A549 (cell line): ENCODE measurements at regions of chr9 and their contacts with region 1.

Region 1: GRCh38 chr9:34546834-34547827 is 24.3 kb upstream of the ENHO start:
- DNase-seq: peak; percentile 66 to 78
- ATAC-seq: peak; percentile 83 to 91
- H3K4me3 ChIP-seq: no peak overlapping the region
- H3K27ac ChIP-seq: no peak overlapping the region
- H3K4me1 ChIP-seq: peaks cover 9% of the 10 kb centered on the region; the same call in 1 of the 3 replicates
- CTCF ChIP-seq: peak; percentile 65
- EP300 ChIP-seq: no peak
- POLR2A ChIP-seq: no peak
- RAD21 ChIP-seq: peak; percentile 61 to 72

Region 2: GRCh38 chr9:34203275-34203991 is 343.7 kb before region 1 on chr9:
- CTCF ChIA-PET with region 1: no interaction called
- POLR2A ChIA-PET with region 1: no interaction called
- DNase-seq: no peak
- ATAC-seq: peak in 1 of 2 experiments; percentile 43; a peak in 3 of 6 replicates
- H3K4me3 ChIP-seq: no peak overlapping the region
- H3K27ac ChIP-seq: peak overlapping the region; percentile 50 to 78; a peak in 5 of 6 replicates
- H3K4me1 ChIP-seq: peaks cover 43% of the 10 kb centered on the region
- CTCF ChIP-seq: no peak
- EP300 ChIP-seq: no peak
- POLR2A ChIP-seq: no peak
- RAD21 ChIP-seq: no peak

Region 3: GRCh38 chr9:34346873-34347799 is 200.0 kb before region 1 on chr9:
- CTCF ChIA-PET with region 1: no interaction called
- POLR2A ChIA-PET with region 1: no interaction called
- DNase-seq: no peak
- ATAC-seq: no peak
- H3K4me3 ChIP-seq: no peak overlapping the region
- H3K27ac ChIP-seq: no peak overlapping the region
- H3K4me1 ChIP-seq: no peaks in the 10 kb centered on the region
- CTCF ChIP-seq: no peak
- EP300 ChIP-seq: no peak
- POLR2A ChIP-seq: no peak
- RAD21 ChIP-seq: no peak

Region 4: GRCh38 chr9:34376596-34377403 is 170.3 kb before region 1 on chr9 and contains the start of gene MYORG:
- CTCF ChIA-PET with region 1: no interaction called
- POLR2A ChIA-PET with region 1: no interaction called
- DNase-seq: peak; percentile 96 to 98
- ATAC-seq: peak; percentile 78 to 89
- H3K4me3 ChIP-seq: peak within 1 kb of the TSS; percentile 79
- H3K27ac ChIP-seq: peak within 1 kb of the TSS; percentile 63 to 85
- H3K4me1 ChIP-seq: peaks cover 30% of the 10 kb centered on the region
- CTCF ChIP-seq: no peak
- EP300 ChIP-seq: no peak
- POLR2A ChIP-seq: peak; percentile 50
- RAD21 ChIP-seq: no peak
- polyA plus RNA-seq, gene MYORG: 2.2 and 3.7 TPM in 2 replicates

Region 5: DNA sequence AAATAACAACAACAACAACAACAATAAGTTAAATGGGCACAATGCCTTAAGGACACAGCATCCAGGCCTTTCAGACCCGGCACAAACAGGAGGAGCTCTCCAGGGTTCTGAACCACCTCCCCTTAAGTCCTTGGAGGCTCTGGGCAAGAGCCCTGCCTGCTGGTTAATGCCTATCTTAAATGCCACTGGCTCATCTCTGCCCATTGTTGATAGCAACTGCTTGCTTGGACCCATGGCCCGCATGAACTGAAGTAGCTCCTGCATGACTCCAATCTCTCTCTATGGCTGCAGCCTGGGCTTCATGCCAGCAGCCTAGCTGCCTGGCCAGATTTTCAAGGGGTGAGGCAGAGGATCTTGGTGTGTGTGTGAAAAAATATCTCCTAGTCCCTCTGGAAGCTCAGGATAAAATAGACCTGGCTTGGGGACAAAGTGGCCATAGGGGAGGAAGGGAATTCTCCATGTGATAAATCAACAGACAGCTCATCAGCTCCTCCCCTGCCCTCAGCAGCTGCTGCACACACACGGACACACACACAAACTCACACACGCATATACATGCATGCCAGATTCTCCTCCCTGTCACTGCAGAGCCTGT is 116.2 kb before region 1 on chr9:
- CTCF ChIA-PET with region 1: interaction called, 12 read pairs
- POLR2A ChIA-PET with region 1: no interaction called
- DNase-seq: peak; percentile 8 to 49
- ATAC-seq: peak; percentile 63 to 68; a peak in 5 of 6 replicates
- H3K4me3 ChIP-seq: no peak overlapping the region
- H3K27ac ChIP-seq: no peak overlapping the region
- H3K4me1 ChIP-seq: no peaks in the 10 kb centered on the region
- CTCF ChIP-seq: no peak
- EP300 ChIP-seq: no peak
- POLR2A ChIP-seq: no peak
- RAD21 ChIP-seq: no peak

Region 6: DNA sequence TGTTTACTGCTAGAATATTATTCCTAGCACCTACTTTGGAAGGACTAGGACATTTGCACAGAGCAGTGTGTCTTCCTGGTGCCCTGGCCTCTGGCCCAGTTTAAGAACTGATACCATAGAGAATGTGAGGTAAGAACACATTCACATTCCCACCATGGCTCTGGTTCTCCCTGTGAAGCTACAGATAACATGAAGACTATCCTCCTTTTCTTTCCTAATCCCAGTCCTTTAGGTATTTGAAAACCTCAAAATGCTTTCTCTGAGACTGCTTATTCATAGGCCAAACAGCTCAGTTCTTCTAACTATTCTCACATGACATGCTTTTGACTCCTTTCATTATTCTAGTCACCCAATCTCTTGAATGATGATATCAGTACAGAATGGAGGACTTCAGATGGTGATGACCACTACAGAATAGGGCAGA is 100.7 kb before region 1 on chr9:
- CTCF ChIA-PET with region 1: interaction called, 27 read pairs
- POLR2A ChIA-PET with region 1: no interaction called
- DNase-seq: no peak
- ATAC-seq: no peak
- H3K4me3 ChIP-seq: no peak overlapping the region
- H3K27ac ChIP-seq: no peak overlapping the region
- H3K4me1 ChIP-seq: no peaks in the 10 kb centered on the region
- CTCF ChIP-seq: no peak
- EP300 ChIP-seq: no peak
- POLR2A ChIP-seq: no peak
- RAD21 ChIP-seq: no peak

Region 7: GRCh38 chr9:34559624-34560452 is 12.7 kb after region 1 on chr9:
- CTCF ChIA-PET with region 1: interaction called, 57 read pairs
- POLR2A ChIA-PET with region 1: no interaction called
- DNase-seq: peak; percentile 27 to 50
- ATAC-seq: peak; percentile 63 to 80; a peak in 5 of 6 replicates
- H3K4me3 ChIP-seq: no peak overlapping the region
- H3K27ac ChIP-seq: peak overlapping the region; percentile 45 to 48; a peak in 4 of 6 replicates
- H3K4me1 ChIP-seq: peaks cover 11% of the 10 kb centered on the region
- CTCF ChIP-seq: no peak
- EP300 ChIP-seq: no peak
- POLR2A ChIP-seq: no peak
- RAD21 ChIP-seq: no peak

Region 8: GRCh38 chr9:34637356-34638137 is 90.4 kb after region 1 on chr9 and contains the start of gene SIGMAR1:
- CTCF ChIA-PET with region 1: interaction called, 22 read pairs
- POLR2A ChIA-PET with region 1: no interaction called
- DNase-seq: peak; percentile 87 to 93
- ATAC-seq: peak; percentile 87 to 92
- H3K4me3 ChIP-seq: peak within 1 kb of the TSS; percentile 73
- H3K27ac ChIP-seq: peak within 1 kb of the TSS; percentile 88 to 95
- H3K4me1 ChIP-seq: peaks cover 26% of the 10 kb centered on the region; the same call in 2 of the 3 replicates
- CTCF ChIP-seq: no peak
- EP300 ChIP-seq: no peak
- POLR2A ChIP-seq: peak; percentile 89
- RAD21 ChIP-seq: no peak
- polyA plus RNA-seq, gene SIGMAR1: 64.6 and 95.4 TPM in 2 replicates

Region 9: DNA sequence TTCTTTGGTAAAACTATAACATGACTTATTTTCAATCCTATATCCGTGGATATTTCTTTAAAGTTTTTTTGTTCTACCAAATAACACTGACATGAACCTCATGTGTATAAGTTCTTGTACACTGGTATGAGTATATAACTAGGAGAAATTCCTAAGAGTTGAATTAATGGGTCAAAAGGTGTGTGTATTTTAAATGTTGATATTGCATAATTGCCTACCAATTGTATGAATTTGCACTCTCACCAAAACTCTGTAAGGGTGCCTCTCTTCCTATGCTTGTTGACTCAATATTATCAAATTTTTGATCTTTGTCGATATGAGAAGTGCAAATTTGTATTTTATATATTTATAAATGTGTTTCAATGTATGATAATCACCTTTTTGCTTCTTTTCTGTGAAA is 185.8 kb after region 1 on chr9:
- CTCF ChIA-PET with region 1: no interaction called
- POLR2A ChIA-PET with region 1: no interaction called
- DNase-seq: no peak
- ATAC-seq: no peak
- H3K4me3 ChIP-seq: no peak overlapping the region
- H3K27ac ChIP-seq: no peak overlapping the region
- H3K4me1 ChIP-seq: no peaks in the 10 kb centered on the region
- CTCF ChIP-seq: no peak
- EP300 ChIP-seq: no peak
- POLR2A ChIP-seq: no peak
- RAD21 ChIP-seq: no peak